ENCODE measurements at regions of chr15 and their contacts with region 1.

Region 1: DNA sequence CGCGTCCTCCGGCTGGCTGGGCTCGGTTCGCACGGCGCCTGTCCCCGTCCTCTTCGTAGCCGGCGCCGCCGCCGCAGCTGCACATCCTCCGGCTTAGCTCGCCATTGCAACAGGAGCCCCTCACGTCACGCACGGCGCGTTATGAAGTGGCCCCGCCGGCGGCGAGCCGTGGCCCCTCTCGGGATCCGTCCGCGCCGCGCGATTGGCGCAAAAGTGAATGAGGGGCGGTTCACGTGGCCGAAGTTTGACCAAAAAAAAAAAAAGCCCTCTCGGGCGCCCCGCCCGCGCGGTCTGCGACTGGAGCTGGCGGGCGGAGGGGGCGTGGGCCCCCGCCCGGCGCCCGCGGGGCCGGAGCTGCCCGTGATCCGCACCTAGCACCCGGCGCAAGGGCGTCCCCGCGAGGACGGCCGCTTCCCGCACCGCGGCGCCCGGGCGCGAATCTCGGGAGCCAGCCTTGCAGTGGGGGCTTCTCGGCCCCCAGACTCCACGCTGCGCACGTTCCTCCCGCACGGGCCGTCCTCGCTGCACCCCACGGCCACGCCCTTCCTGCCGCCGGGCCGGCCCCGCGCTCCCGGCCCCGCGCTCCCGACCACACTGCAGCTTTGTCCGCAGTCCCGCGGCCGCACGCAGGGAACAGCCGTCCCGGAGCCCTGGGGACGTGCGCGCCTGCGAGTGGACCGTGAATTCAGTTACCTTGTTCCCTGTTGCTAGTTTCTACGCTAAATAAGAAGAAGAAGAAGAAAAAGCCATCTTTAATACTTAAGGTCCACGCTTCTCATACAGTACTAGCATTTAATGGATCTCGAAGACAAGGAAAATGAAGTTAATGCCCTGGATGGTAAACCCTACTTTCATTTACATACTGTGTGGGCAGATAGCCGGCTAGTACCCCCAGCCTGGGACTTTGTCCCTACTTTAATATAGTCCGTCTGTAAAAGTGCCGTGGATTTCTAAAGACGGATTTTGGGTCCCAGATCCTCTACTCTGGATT is at the start of gene CHSY1:
- DNase-seq: peak; percentile 93
- H3K4me3 ChIP-seq: peak within 1 kb of the TSS; percentile 75 to 97 (median 88)
- H3K27ac ChIP-seq: peak within 1 kb of the TSS; percentile 92 to 96 (median 94)
- H3K4me1 ChIP-seq: peaks cover 10 to 43% (median 26%) of the 10 kb centered on the region in 4 donors
- H3K27me3 ChIP-seq: no peaks in the 10 kb centered on the region
- CTCF ChIP-seq: no peak
- EP300 ChIP-seq: no peak
- POLR2A ChIP-seq: peak; percentile 67
- total RNA-seq, gene CHSY1: 4.0 to 33.7 (median 11.8) TPM

Region 2: GRCh38 chr15:100627789-100628395 is 624.2 kb before region 1 on chr15:
- in situ Hi-C with region 1: loop called in 3 of 4 experiments (anchors 25 kb)
- intact Hi-C with region 1: no loop called
- DNase-seq: peak; percentile 70
- H3K4me3 ChIP-seq: no peak overlapping the region
- H3K27ac ChIP-seq: no peak overlapping the region
- H3K4me1 ChIP-seq: no peaks in the 10 kb centered on the region
- H3K27me3 ChIP-seq: no peaks in the 10 kb centered on the region
- CTCF ChIP-seq: peak; percentile 83 to 85 (median 84)
- EP300 ChIP-seq: no peak
- POLR2A ChIP-seq: no peak

Region 3: GRCh38 chr15:100918034-100918689 is 334.0 kb before region 1 on chr15:
- in situ Hi-C with region 1: loop called (anchors 25 kb)
- intact Hi-C with region 1: no loop called
- DNase-seq: peak; percentile 90
- H3K4me3 ChIP-seq: peak overlapping the region; percentile 53 to 78 (median 74)
- H3K27ac ChIP-seq: peak overlapping the region; percentile 84 to 90 (median 85)
- H3K4me1 ChIP-seq: peaks cover 4 to 30% (median 8%) of the 10 kb centered on the region in 4 donors
- H3K27me3 ChIP-seq: no peaks in the 10 kb centered on the region
- CTCF ChIP-seq: peak; percentile 93 to 98 (median 97)
- EP300 ChIP-seq: no peak
- POLR2A ChIP-seq: peak; percentile 48

Region 4: GRCh38 chr15:101014921-101015841 is 236.9 kb before region 1 on chr15:
- in situ Hi-C with region 1: loop called in 3 of 4 experiments (anchors 5 to 10 kb)
- intact Hi-C with region 1: loop called (anchors 2 kb)
- DNase-seq: peak; percentile 75
- H3K4me3 ChIP-seq: no peak overlapping the region
- H3K27ac ChIP-seq: no peak overlapping the region
- H3K4me1 ChIP-seq: no peaks in the 10 kb centered on the region
- H3K27me3 ChIP-seq: no peaks in the 10 kb centered on the region
- CTCF ChIP-seq: peak; percentile 66 to 89 (median 83)
- EP300 ChIP-seq: no peak
- POLR2A ChIP-seq: no peak

Region 5: DNA sequence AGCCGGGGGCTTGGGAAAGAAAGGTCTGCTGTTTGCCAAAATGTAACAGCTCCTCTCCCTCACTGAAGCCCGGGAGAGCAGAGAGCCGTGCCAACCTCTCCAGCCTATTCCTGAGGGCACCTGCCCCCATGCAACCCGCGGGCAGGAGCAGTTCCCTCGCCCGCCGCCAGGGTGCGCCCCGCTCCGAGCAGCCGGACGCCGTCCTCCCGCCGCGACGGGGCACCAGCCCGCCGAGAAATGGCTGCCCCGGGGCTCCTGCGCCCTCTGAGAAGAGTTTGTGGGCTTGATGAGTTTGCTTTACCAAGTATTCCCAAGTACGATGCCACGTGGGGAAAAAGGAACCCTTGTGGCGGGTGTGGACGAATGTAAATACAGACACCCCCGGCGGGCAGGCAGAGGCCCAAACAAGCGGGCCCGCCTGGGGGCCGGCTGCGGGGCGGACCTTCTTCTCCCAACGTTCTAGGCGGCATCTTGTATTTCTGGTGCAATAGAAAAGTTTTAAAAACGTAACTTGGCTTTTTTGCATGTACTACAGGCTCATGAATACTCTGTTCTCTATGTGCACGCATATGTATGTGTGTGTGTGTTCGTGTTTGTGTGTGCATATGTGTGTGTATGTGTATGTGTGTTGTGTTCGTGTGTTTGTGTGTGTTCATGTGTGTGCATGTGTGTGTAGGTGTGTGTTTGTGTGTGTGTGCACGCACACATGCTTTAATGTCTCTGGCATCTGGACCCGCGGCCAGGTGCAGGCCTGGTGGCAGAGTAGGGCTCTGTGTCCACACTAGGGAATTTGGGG is 163.1 kb before region 1 on chr15:
- in situ Hi-C with region 1: loop called in 2 of 4 experiments (anchors 5 to 10 kb)
- intact Hi-C with region 1: loop called (anchors 5 kb)
- DNase-seq: peak; percentile 80
- H3K4me3 ChIP-seq: peak overlapping the region in 2 of 4 donors; percentile 25 to 39
- H3K27ac ChIP-seq: no peak overlapping the region
- H3K4me1 ChIP-seq: peaks cover 0 to 12% (median 2%) of the 10 kb centered on the region in 4 donors
- H3K27me3 ChIP-seq: no peaks in the 10 kb centered on the region
- CTCF ChIP-seq: peak; percentile 94 to 100 (median 100)
- EP300 ChIP-seq: no peak
- POLR2A ChIP-seq: no peak

Region 6: GRCh38 chr15:101391981-101392640 is 140.0 kb after region 1 on chr15:
- in situ Hi-C with region 1: no loop called
- intact Hi-C with region 1: no loop called
- DNase-seq: no peak
- H3K4me3 ChIP-seq: no peak overlapping the region
- H3K27ac ChIP-seq: no peak overlapping the region
- H3K4me1 ChIP-seq: no peaks in the 10 kb centered on the region
- H3K27me3 ChIP-seq: no peaks in the 10 kb centered on the region
- CTCF ChIP-seq: no peak
- EP300 ChIP-seq: no peak
- POLR2A ChIP-seq: no peak

Measured in transverse colon (tissue), 4 donors.